Heart right ventricle (tissue), 16 donors: ENCODE measurements at regions of chr10 and their contacts with region 1.

Region 1: GRCh38 chr10:47024399-47025252 is 113.4 kb downstream of the PTPN20 start:
- DNase-seq: peak in 1 of 2 donors; percentile 62
- ATAC-seq: peak in 7 of 8 donors; percentile 66 to 72 (median 69)
- H3K4me3 ChIP-seq: no peak overlapping the region
- H3K27ac ChIP-seq: no peak overlapping the region
- H3K4me1 ChIP-seq: peaks cover 0 to 15% (median 0%) of the 10 kb centered on the region in 9 donors
- H3K27me3 ChIP-seq: no peaks in the 10 kb centered on the region
- CTCF ChIP-seq: peak; percentile 54 to 84 (median 76)

Region 2: GRCh38 chr10:47340608-47341170 is 316.1 kb after region 1 on chr10:
- intact Hi-C with region 1: loop called in 1 of 10 experiments (anchors 1 kb)
- DNase-seq: peak; percentile 46 to 54
- ATAC-seq: peak in 6 of 8 donors; percentile 29 to 71 (median 57)
- H3K4me3 ChIP-seq: no peak overlapping the region
- H3K27ac ChIP-seq: no peak overlapping the region
- H3K4me1 ChIP-seq: no peaks in the 10 kb centered on the region
- H3K27me3 ChIP-seq: peaks cover 0 to 18% (median 0%) of the 10 kb centered on the region in 7 donors
- CTCF ChIP-seq: peak; percentile 88 to 98 (median 94)